ENCODE measurements at regions of chr17 and their contacts with region 1.

Region 1: GRCh38 chr17:74296548-74296936 is 22.5 kb downstream of the DNAI2 start:
- DNase-seq: peak; percentile 40
- H3K4me3 ChIP-seq: no peak overlapping the region
- H3K27ac ChIP-seq: no peak overlapping the region
- H3K4me1 ChIP-seq: no peaks in the 10 kb centered on the region
- H3K27me3 ChIP-seq: no peaks in the 10 kb centered on the region
- CTCF ChIP-seq: peak; percentile 31

Region 2: DNA sequence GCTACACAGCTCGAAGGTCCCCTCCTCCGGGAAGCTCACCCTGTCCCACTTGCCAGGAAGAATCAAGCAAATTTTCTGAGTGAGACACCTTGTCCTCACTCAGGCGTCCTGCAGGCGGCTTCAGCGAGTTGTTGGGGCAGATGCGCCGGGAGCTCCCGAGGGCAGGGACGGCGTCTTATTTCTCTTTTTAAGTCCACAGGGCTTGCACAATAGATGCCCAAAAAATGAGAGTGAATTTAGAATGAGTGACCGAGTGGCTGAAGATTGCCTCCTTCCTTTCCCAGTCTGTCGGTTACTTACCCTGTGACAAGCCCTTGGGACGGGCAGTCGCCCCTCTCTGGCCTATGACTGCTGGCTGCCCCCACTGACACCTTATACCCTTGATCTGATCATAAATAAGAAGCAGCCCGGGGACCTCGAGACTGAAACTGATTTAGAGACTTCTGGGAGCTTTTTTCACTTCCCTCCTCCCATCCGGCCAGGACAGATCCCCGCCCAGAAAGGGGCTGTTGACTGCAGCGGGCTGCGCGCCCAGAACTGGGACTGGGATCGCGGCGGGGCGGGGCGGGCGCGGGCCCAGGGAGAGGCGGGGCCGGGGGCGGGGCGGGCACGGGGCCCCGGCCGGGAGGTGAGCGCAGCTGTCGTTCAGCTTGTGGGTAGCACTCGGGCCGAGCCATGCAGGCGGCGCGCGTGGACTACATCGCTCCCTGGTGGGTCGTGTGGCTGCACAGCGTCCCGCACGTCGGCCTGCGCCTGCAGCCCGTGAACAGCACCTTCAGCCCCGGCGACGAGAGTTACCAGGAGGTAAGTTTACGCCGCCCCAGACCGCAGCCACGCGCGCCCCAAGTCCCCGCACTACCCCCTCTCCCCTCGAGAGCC is 83.4 kb before region 1 on chr17 and contains the start of gene TTYH2:
- intact Hi-C with region 1: loop called (anchors 5 kb)
- DNase-seq: peak; percentile 90
- H3K4me3 ChIP-seq: peak within 1 kb of the TSS; percentile 48
- H3K27ac ChIP-seq: peak within 1 kb of the TSS; percentile 76
- H3K4me1 ChIP-seq: peaks cover 15% of the 10 kb centered on the region
- H3K27me3 ChIP-seq: peaks cover 7% of the 10 kb centered on the region
- CTCF ChIP-seq: no peak
- total RNA-seq, gene TTYH2: 0.86 to 2.9 TPM